Cardiac septum (tissue), 1 donor: ENCODE measurements at regions of chr2 and their contacts with region 1.

Region 1: DNA sequence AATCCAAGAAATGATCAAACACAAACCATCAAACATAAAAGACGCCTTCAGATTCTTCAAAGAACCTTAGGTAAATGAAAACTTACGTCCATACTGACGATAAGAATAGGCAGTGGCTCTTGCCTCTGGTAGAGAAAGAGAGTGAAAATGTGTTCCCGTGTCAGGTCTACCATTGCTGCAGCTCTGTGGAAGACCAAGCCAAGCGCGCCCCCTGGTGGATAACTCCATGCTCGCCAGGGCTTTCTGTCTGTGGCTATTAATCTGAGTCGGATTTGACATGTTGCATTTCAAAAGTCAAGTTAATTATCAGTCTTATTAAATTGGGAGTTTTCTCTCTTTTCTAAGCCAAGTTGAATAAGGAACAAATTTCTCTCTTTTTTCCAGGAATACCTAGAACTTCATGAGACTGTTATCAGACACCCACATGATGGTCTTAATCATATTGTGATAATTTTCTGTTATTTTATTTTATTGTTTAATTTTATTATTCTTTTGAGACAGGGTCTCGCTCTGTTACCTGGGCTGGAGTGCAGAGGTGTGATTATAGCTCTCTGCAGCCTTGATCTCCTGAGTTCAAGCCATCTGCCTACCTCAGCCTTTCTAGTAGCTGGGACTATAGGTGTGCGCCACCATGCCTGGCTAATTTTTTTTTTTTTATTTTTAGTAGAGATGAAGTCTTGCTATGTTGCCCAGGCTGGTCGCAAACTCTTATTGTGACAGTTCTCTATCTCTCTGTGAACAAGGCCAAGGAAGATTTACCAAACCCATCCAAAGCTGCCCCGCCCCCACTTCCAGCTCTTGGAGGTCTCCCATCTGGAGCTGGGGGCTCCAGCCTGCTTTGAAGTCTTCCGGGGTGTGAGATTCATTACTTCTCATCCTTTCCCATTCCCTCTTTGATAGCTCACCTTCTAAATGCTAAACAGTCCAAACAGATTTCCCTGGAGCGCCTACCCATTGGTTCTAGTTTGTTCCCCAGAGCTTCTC is 15.8 kb upstream of the ZAP70 start:
- DNase-seq: peak; percentile 95

Region 2: GRCh38 chr2:98379672-98380535 is 682.4 kb after region 1 on chr2:
- intact Hi-C with region 1: loop called (anchors 5 kb)
- DNase-seq: no peak